CD8-positive, alpha-beta T cell (primary cell): ENCODE measurements at regions of chr9 and their contacts with region 1.

Region 1: DNA sequence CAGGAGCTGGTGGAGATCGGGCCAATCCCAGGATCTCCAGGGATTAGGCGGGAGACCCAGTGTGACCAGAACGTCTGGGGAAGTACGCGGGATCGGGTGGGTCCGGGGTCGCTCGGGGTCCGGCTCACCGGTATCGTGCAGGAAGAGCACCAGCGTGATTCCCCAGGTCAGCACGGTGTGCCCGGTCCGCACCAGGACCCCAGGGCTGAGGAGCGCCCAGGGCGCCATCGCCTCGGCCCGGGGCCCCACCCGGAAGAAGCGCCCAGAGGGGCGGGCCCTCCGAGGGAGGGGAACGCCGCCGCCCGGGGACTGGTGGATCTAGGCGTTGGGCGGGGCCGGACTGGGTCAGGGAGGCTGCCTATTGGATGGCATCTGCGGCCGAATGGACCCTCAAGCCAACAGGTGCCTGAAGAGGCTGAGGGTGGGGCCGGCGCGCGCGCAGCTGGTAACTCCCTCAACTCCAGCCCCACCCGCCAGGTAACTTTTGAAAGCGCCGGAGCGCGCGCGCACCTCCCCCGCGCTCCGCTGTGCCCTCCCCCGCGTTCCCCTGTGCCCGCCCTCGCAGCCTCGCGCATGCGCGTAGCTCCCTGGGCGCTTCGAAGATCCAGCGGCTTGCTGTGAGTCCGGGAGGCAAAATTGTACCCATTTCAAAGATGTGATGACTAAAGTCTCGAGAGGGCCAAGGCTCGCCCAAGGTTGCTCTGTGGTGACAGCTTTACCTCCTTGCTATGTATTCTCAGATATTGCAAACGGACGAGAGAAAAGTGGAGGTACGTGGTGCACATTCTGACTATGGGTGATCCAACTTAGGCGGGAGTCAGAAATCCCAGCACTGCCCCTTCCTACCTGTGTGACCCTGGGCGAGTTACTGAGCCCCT is at the start of gene ZDHHC12:
- DNase-seq: peak; percentile 97 to 100 (median 99)
- ATAC-seq: peak; percentile 97
- H3K4me3 ChIP-seq: peak within 1 kb of the TSS; percentile 74 to 84
- H3K4me3 Mint-ChIP-seq: peak within 1 kb of the TSS; percentile 89
- H3K27ac ChIP-seq: peak within 1 kb of the TSS; percentile 69 to 79
- H3K27ac Mint-ChIP-seq: peak within 1 kb of the TSS; percentile 92
- H3K4me1 ChIP-seq: peaks cover 37% of the 10 kb centered on the region
- H3K4me1 Mint-ChIP-seq: peaks cover 29% of the 10 kb centered on the region
- H3K27me3 ChIP-seq: no peaks in the 10 kb centered on the region
- H3K27me3 Mint-ChIP-seq: no peaks in the 10 kb centered on the region
- CTCF ChIP-seq: no peak
- total RNA-seq, gene ZDHHC12: 25.5 to 29.6 TPM

Region 2: DNA sequence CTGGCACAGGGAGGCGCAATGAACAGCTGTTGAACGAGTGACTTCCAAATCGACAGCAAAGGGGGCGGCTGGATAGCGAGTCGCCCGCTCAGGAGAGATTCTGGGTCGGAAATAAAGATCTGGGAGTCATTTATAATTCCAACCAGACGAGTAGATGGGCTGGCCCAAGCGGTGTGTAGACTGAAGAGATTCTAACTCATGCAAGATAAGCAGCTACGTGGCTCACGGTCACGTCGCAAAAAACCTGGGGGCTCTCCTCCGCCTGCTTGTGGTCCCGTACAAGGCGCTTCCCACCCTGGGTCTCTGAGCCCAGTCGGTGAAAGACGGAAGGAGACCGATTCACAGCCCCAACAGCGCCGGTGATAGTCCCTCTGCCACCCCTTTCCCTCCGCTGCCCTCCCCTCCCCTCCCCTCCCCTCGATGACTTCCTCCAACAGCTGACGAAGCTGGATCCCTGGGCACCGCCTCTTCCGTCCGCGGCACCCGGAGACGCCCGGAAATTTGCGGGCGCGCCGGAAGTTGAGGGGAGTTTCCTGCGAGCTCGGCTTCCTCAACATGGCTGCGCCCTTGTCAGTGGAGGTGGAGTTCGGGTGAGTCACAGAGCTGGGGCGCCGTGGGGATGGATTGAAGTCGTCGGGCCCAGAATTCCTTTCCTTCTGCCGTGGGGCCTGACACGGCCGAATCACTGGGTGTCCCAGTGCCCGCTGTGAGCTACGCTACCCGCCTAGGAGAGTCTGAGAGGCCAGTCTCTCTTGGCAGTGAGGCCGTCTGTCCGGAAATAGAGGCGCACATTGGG is 353.1 kb before region 1 on chr9 and contains the start of gene URM1:
- CTCF ChIA-PET with region 1: no interaction called
- POLR2A ChIA-PET with region 1: no interaction called
- intact Hi-C with region 1: loop called in 1 of 2 experiments (anchors 2 kb)
- DNase-seq: peak; percentile 91 to 98 (median 96)
- ATAC-seq: peak; percentile 90
- H3K4me3 ChIP-seq: peak within 1 kb of the TSS; percentile 84 to 95
- H3K4me3 Mint-ChIP-seq: peak within 1 kb of the TSS; percentile 97
- H3K27ac ChIP-seq: peak within 1 kb of the TSS; percentile 76 to 96
- H3K27ac Mint-ChIP-seq: peak within 1 kb of the TSS; percentile 98
- H3K4me1 ChIP-seq: peaks cover 16% of the 10 kb centered on the region
- H3K4me1 Mint-ChIP-seq: peaks cover 43% of the 10 kb centered on the region
- H3K27me3 ChIP-seq: no peaks in the 10 kb centered on the region
- H3K27me3 Mint-ChIP-seq: no peaks in the 10 kb centered on the region
- CTCF ChIP-seq: no peak
- total RNA-seq, gene URM1: 30.4 to 31.5 TPM

Region 3: DNA sequence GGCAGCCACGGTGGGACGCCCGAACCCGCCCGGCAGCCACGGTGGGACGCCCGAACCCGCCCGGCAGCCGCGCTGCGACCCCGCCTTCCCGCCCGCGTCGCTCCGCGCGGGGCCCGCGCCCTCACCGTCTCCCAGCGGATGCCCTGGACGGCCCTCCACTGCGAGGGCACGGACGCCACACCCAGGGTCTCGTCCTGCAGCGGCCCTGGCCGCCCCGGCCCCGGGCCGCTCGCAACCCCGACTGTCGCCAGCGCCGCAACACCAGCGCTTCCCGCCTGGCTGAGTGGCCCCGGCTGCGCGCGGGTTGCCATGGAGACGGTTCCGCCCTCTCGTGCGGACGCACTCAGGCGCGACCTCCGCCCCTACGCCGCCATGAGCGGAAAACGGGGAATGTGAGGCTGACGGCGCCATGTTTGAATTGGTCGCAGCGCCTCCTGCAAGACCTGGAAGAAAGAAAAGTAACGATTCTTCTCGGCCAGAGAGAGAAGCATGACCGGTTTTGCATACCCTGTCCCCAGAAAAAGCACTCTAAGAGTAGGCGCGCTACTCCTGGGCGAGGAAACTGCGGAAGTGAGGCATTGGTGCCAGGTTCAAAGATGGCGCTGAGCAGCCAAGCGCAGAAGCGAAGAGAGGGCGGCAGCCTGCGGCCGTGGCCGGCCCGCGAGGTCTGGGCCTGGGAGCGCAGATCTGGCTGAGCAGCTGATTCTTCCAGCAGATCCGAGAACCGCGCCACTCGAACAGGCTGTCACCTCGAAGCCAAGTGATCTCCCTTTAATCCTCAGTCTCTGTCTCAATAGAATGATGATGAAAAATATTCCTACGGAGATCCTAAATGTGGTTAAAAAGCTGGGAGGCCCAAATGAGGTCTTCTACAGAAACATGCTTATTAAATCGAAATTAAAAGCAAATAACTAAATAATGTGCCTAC is 67.4 kb before region 1 on chr9 and contains the start of gene DYNC2I2:
- CTCF ChIA-PET with region 1: no interaction called
- POLR2A ChIA-PET with region 1: interaction called, 4 read pairs
- intact Hi-C with region 1: loop called (anchors 1 kb)
- DNase-seq: peak; percentile 92 to 98 (median 97)
- ATAC-seq: peak; percentile 96
- H3K4me3 ChIP-seq: peak within 1 kb of the TSS; percentile 72 to 76
- H3K4me3 Mint-ChIP-seq: peak within 1 kb of the TSS; percentile 95
- H3K27ac ChIP-seq: peak within 1 kb of the TSS; percentile 88 to 97
- H3K27ac Mint-ChIP-seq: peak within 1 kb of the TSS; percentile 99
- H3K4me1 ChIP-seq: peaks cover 5% of the 10 kb centered on the region
- H3K4me1 Mint-ChIP-seq: peaks cover 7% of the 10 kb centered on the region
- H3K27me3 ChIP-seq: no peaks in the 10 kb centered on the region
- H3K27me3 Mint-ChIP-seq: no peaks in the 10 kb centered on the region
- CTCF ChIP-seq: no peak
- total RNA-seq, gene DYNC2I2: 3.7 to 3.9 TPM

Region 4: GRCh38 chr9:128688512-128689292 is 35.4 kb before region 1 on chr9 and contains the start of gene SET:
- CTCF ChIA-PET with region 1: interaction called, 4 read pairs
- POLR2A ChIA-PET with region 1: interaction called, 14 read pairs
- intact Hi-C with region 1: loop called (anchors 1 kb)
- DNase-seq: peak; percentile 81 to 97 (median 92)
- ATAC-seq: peak; percentile 78
- H3K4me3 ChIP-seq: peak within 1 kb of the TSS; percentile 68 to 90
- H3K4me3 Mint-ChIP-seq: peak within 1 kb of the TSS; percentile 90
- H3K27ac ChIP-seq: peak within 1 kb of the TSS; percentile 68 to 91
- H3K27ac Mint-ChIP-seq: peak within 1 kb of the TSS; percentile 96
- H3K4me1 ChIP-seq: peaks cover 64% of the 10 kb centered on the region
- H3K4me1 Mint-ChIP-seq: peaks cover 67% of the 10 kb centered on the region
- H3K27me3 ChIP-seq: no peaks in the 10 kb centered on the region
- H3K27me3 Mint-ChIP-seq: no peaks in the 10 kb centered on the region
- CTCF ChIP-seq: no peak
- total RNA-seq, gene SET: 243 to 260 TPM

Region 5: DNA sequence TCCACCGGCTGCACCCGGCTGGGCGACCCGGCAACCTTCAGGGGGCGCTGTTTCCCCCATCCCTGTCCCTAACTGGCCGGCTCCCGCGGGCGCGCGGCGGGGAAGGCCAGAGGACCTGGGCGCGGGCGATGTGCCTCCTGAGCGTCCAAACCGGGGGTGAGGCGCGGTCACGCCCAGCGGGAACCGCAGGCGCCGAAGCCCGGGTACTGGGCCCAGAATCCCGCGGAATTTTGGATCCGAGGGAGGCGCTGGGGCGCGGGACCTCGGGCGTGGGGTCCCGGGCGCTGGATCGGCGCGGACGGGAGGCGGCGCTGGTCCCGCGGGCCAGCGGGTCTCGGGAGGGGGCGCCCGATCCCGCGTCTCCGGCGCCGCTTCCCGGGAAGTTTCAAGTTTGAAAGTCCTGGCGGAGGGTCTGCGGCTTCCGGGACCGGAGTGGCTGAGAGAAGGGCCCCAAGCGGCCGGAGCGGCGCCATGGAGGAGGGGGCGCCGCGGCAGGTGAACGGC is 21.6 kb before region 1 on chr9 and contains the start of gene PKN3:
- CTCF ChIA-PET with region 1: interaction called, 8 read pairs
- POLR2A ChIA-PET with region 1: interaction called, 5 read pairs
- intact Hi-C with region 1: loop called (anchors 1 kb)
- DNase-seq: peak; percentile 76 to 91 (median 88)
- ATAC-seq: peak; percentile 85
- H3K4me3 ChIP-seq: peak within 1 kb of the TSS; percentile 49 to 70
- H3K4me3 Mint-ChIP-seq: peak within 1 kb of the TSS; percentile 87
- H3K27ac ChIP-seq: peak within 1 kb of the TSS in 1 of 2 experiments; percentile 51
- H3K27ac Mint-ChIP-seq: peak within 1 kb of the TSS; percentile 52
- H3K4me1 ChIP-seq: peaks cover 16% of the 10 kb centered on the region
- H3K4me1 Mint-ChIP-seq: peaks cover 13% of the 10 kb centered on the region
- H3K27me3 ChIP-seq: no peaks in the 10 kb centered on the region
- H3K27me3 Mint-ChIP-seq: no peaks in the 10 kb centered on the region
- CTCF ChIP-seq: peak; percentile 89
- total RNA-seq, gene PKN3: 1.3 to 2.0 TPM

Region 6: GRCh38 chr9:128818099-128818838 is 94.2 kb after region 1 on chr9 and contains the start of gene ENDOG:
- CTCF ChIA-PET with region 1: no interaction called
- POLR2A ChIA-PET with region 1: interaction called, 6 read pairs
- intact Hi-C with region 1: loop called (anchors 1 to 10 kb)
- DNase-seq: peak; percentile 94 to 98 (median 97)
- ATAC-seq: peak; percentile 96
- H3K4me3 ChIP-seq: peak within 1 kb of the TSS; percentile 59 to 75
- H3K4me3 Mint-ChIP-seq: peak within 1 kb of the TSS; percentile 91
- H3K27ac ChIP-seq: peak within 1 kb of the TSS; percentile 52 to 67
- H3K27ac Mint-ChIP-seq: peak within 1 kb of the TSS; percentile 87
- H3K4me1 ChIP-seq: peaks cover 12% of the 10 kb centered on the region
- H3K4me1 Mint-ChIP-seq: peaks cover 21% of the 10 kb centered on the region
- H3K27me3 ChIP-seq: no peaks in the 10 kb centered on the region
- H3K27me3 Mint-ChIP-seq: no peaks in the 10 kb centered on the region
- CTCF ChIP-seq: peak; percentile 98
- total RNA-seq, gene ENDOG: 6.2 to 6.4 TPM

Region 7: DNA sequence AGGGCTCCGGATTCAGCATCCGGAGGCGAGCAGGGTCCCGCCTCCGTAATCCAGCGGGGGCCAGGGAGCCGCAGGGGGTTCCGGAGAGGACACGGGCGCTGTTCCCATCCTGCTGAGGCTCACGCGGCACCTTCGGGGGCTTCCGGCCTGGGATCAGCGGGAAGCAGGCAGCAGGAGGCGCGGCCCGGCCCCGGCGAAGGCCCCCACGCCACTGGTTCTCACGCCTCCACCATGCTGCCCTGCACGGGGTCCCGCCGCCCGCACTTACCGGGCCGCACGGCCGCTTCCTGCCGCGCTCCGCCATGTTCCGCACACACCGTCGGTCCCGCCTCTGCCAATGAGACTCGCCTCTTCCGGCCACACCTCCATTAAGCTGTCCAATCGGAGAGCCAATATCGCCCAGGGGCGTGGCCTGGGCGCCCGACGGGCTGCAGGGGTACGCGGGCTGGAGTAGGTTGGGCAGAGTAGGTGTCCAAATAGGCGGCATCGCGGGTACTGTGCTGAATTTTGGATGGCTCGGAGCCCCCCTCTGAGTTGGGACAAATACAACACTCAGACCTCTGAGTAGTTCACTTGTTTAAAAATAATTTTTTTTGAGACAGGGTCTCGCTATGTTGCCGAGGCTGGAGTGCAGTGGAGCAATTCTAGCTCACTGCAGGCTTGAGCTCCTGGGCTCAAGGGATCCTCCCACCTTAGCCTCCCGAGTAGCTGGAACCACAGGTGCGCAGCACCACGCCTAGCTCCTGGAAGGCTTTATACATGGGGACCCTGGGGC is 105.6 kb after region 1 on chr9 and contains the start of gene SPOUT1:
- CTCF ChIA-PET with region 1: no interaction called
- POLR2A ChIA-PET with region 1: no interaction called
- intact Hi-C with region 1: no loop called
- DNase-seq: peak; percentile 88 to 96 (median 92)
- ATAC-seq: peak; percentile 99
- H3K4me3 ChIP-seq: peak within 1 kb of the TSS; percentile 89 to 99
- H3K4me3 Mint-ChIP-seq: peak within 1 kb of the TSS; percentile 96
- H3K27ac ChIP-seq: peak within 1 kb of the TSS; percentile 73 to 83
- H3K27ac Mint-ChIP-seq: peak within 1 kb of the TSS; percentile 94
- H3K4me1 ChIP-seq: peaks cover 18% of the 10 kb centered on the region
- H3K4me1 Mint-ChIP-seq: peaks cover 20% of the 10 kb centered on the region
- H3K27me3 ChIP-seq: no peaks in the 10 kb centered on the region
- H3K27me3 Mint-ChIP-seq: no peaks in the 10 kb centered on the region
- CTCF ChIP-seq: no peak
- total RNA-seq, gene SPOUT1: 25.0 to 25.2 TPM

Region 8: GRCh38 chr9:128892317-128892921 is 168.3 kb after region 1 on chr9:
- CTCF ChIA-PET with region 1: no interaction called
- POLR2A ChIA-PET with region 1: no interaction called
- intact Hi-C with region 1: no loop called
- DNase-seq: peak in 8 of 9 experiments; percentile 35 to 65 (median 48)
- ATAC-seq: peak; percentile 76
- H3K4me3 ChIP-seq: no peak overlapping the region
- H3K4me3 Mint-ChIP-seq: no peak overlapping the region
- H3K27ac ChIP-seq: peak overlapping the region in 1 of 2 experiments; percentile 68
- H3K27ac Mint-ChIP-seq: peak overlapping the region; percentile 45
- H3K4me1 ChIP-seq: peaks cover 54% of the 10 kb centered on the region
- H3K4me1 Mint-ChIP-seq: peaks cover 50% of the 10 kb centered on the region
- H3K27me3 ChIP-seq: no peaks in the 10 kb centered on the region
- H3K27me3 Mint-ChIP-seq: no peaks in the 10 kb centered on the region
- CTCF ChIP-seq: no peak

Region 9: DNA sequence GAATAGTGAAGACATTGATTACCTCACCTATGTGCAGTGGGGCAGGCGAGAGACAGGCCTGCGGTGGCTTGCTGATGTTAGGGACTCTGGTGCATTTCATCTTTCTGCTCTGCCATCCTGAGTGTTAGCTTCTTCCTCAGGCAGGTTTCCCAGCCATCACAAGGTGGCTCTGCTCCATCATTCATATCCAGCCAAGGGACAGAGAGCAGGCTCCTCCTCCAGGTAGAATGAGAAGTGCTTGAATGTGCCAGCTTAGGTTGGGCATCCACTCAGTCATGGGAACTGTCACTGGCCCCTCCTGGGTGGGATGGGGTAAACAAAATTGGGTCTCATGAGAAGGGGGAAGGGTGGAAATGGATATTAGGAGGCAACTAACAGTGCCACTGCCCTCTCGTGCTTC is 1354.4 kb after region 1 on chr9:
- CTCF ChIA-PET with region 1: no interaction called
- POLR2A ChIA-PET with region 1: no interaction called
- intact Hi-C with region 1: no loop called
- DNase-seq: no peak
- ATAC-seq: no peak
- H3K4me3 ChIP-seq: no peak overlapping the region
- H3K4me3 Mint-ChIP-seq: no peak overlapping the region
- H3K27ac ChIP-seq: no peak overlapping the region
- H3K27ac Mint-ChIP-seq: no peak overlapping the region
- H3K4me1 ChIP-seq: no peaks in the 10 kb centered on the region
- H3K4me1 Mint-ChIP-seq: peaks cover 11% of the 10 kb centered on the region
- H3K27me3 ChIP-seq: no peaks in the 10 kb centered on the region
- H3K27me3 Mint-ChIP-seq: no peaks in the 10 kb centered on the region
- CTCF ChIP-seq: no peak